Left ventricle myocardium inferior (tissue), 1 donor: ENCODE measurements at regions of chr5 and their contacts with region 1.

Region 1: GRCh38 chr5:132490486-132491367 is at the start of gene IRF1:
- DNase-seq: peak; percentile 96
- H3K4me3 ChIP-seq: peak within 1 kb of the TSS; percentile 89
- H3K27ac ChIP-seq: peak within 1 kb of the TSS; percentile 99
- H3K4me1 ChIP-seq: peaks cover 82% of the 10 kb centered on the region
- H3K27me3 ChIP-seq: no peaks in the 10 kb centered on the region
- CTCF ChIP-seq: peak; percentile 5
- total RNA-seq, gene IRF1: 10.9 TPM

Region 2: GRCh38 chr5:132419502-132420468 is 70.9 kb before region 1 on chr5:
- intact Hi-C with region 1: loop called (anchors 5 kb)
- DNase-seq: peak; percentile 65
- H3K4me3 ChIP-seq: no peak overlapping the region
- H3K27ac ChIP-seq: peak overlapping the region; percentile 99
- H3K4me1 ChIP-seq: peaks cover 100% of the 10 kb centered on the region
- H3K27me3 ChIP-seq: no peaks in the 10 kb centered on the region
- CTCF ChIP-seq: peak; percentile 90